ENCODE measurements at regions of chr16 and their contacts with region 1.

Region 1: DNA sequence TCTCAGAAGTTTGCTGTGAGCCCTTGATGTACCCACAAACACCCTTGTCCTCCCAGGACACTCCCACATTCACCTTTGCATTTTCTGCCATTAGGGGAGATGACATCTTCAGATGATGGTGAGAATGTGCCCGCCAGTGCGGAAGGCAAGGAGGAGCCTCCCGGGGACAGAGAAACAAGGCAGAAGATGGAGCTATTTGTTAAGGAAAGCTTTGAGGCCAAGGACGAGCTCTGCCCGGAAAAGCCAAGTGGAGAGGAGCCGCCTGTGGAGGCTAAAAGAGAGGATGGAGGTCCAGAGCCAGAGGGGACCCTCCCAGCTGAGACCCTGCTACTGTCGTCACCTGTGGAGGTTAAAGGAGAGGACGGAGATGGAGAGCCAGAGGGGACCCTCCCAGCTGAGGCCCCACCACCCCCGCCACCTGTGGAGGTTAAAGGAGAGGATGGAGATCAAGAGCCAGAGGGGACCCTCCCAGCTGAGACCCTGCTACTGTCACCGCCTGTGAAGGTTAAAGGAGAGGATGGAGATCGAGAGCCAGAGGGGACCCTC is 17.0 kb downstream of the TAF1C start:
- DNase-seq: no peak
- ATAC-seq: peak; percentile 60; the same call in 1 of the 2 replicates
- H3K4me3 ChIP-seq: no peak overlapping the region
- H3K27ac ChIP-seq: no peak overlapping the region
- H3K4me1 ChIP-seq: no peaks in the 10 kb centered on the region
- H3K27me3 ChIP-seq: 0 out of 2 replicates have a peak, but pooled peaks cover 2% of the 10 kb centered on the region
- CTCF ChIP-seq: no peak

Region 2: GRCh38 chr16:84096115-84097012 is 73.5 kb before region 1 on chr16:
- CTCF ChIA-PET with region 1: no interaction called
- POLR2A ChIA-PET with region 1: no interaction called
- in situ Hi-C with region 1: no loop called
- intact Hi-C with region 1: loop called (anchors 5 kb)
- DNase-seq: peak; percentile 51
- ATAC-seq: peak; percentile 91
- H3K4me3 ChIP-seq: no peak overlapping the region
- H3K27ac ChIP-seq: peak overlapping the region; percentile 48; the same call in 1 of the 2 replicates
- H3K4me1 ChIP-seq: peaks cover 15% of the 10 kb centered on the region
- H3K27me3 ChIP-seq: no peaks in the 10 kb centered on the region
- CTCF ChIP-seq: no peak